ENCODE measurements at regions of chr2 and their contacts with region 1.

Region 1: DNA sequence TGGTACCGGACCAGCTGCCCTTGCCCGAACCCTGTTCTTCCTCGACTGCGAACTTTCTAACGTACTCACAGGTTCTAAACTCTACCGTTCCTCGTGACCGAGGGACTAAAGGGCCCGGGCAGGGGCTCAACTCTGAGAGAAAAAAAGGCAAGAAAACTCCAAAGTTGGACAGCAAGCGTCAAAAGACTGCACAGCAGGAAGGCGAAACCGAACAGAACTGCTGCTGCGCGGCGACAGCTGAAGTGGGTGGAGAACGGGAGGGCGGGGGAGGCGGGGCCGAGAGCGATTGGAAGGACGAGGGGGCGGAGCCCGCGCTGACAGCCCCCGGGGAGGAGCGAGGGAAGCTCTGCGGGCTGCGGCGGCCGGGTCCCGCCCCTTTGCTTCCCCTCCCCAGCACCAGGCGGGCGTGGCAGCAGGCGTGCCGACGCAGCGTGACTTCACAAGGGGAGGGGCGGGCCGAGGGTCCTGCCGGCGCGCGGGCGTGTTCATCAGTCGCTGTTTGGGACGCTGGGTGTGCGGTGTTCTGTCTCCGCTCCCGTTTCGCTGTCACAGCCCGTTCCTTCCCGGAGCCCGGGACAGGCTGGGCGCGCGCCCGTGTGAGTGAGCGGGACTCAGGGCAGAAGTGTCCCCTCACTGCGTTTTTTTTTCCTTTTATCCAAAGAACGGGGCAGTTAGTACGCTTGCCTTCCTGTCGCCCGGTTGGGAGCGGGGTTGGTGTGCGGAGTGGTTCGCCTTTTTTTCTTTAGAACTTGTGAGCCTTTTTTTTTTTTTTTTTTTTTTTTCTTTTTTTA is at the start of gene NABP1:
- DNase-seq: peak; percentile 97
- H3K4me3 ChIP-seq: peak within 1 kb of the TSS; percentile 84
- H3K27ac ChIP-seq: peak within 1 kb of the TSS; percentile 59
- H3K4me1 ChIP-seq: peaks cover 47% of the 10 kb centered on the region
- CTCF ChIP-seq: no peak
- total RNA-seq, gene NABP1: 16.7 and 18.9 TPM in 2 replicates

Region 2: DNA sequence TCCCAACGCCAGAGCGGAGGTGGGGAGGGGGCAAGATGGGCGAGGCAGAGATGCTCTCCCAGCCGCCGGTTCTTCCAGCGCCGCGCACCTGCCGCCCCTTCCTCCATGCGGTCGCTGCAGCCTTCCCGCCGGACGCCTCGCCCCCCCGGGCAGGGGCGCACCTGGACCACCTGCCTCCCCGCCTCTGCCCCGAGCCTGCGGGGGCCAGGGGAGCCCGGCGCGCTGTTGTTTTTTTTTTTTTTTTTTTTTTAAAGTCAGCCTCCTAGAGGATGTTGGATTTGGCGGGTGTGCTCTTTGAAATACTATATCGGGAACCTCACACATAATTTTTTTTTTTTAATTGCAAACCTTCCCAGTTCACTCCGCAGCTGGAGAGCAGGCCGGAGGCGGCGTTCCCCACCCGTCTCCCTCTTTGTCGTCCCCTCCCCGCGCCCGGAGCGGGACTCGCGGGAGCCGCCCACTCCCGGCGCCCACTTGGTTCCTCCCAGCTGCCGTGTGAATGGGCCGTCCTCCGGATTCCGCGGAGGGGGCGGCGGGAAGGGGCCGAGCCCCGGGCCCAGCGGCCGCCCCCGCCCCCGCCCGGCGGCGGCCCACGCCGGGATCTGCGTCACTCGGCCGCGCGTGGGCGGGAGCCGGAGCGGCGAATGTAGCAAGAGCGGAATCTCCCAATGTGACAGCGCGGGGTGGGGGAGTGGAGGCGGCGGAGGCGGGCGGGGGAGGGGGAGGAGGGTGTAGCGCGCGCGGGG is 1029.4 kb before region 1 on chr2:
- CTCF ChIA-PET with region 1: no interaction called
- POLR2A ChIA-PET with region 1: interaction called, 3 read pairs
- intact Hi-C with region 1: loop called (anchors 5 kb)
- DNase-seq: peak; percentile 81
- H3K4me3 ChIP-seq: peak overlapping the region; percentile 85
- H3K27ac ChIP-seq: peak overlapping the region; percentile 31
- H3K4me1 ChIP-seq: peaks cover 15% of the 10 kb centered on the region
- CTCF ChIP-seq: no peak

Region 3: GRCh38 chr2:190880378-190881073 is 797.3 kb before region 1 on chr2 and contains the start of gene GLS:
- CTCF ChIA-PET with region 1: no interaction called
- POLR2A ChIA-PET with region 1: interaction called, 8 read pairs
- intact Hi-C with region 1: loop called (anchors 5 kb)
- DNase-seq: peak; percentile 96
- H3K4me3 ChIP-seq: peak within 1 kb of the TSS; percentile 84
- H3K27ac ChIP-seq: peak within 1 kb of the TSS; percentile 87
- H3K4me1 ChIP-seq: peaks cover 28% of the 10 kb centered on the region
- CTCF ChIP-seq: no peak
- total RNA-seq, gene GLS: 82.0 and 102 TPM in 2 replicates

Region 4: DNA sequence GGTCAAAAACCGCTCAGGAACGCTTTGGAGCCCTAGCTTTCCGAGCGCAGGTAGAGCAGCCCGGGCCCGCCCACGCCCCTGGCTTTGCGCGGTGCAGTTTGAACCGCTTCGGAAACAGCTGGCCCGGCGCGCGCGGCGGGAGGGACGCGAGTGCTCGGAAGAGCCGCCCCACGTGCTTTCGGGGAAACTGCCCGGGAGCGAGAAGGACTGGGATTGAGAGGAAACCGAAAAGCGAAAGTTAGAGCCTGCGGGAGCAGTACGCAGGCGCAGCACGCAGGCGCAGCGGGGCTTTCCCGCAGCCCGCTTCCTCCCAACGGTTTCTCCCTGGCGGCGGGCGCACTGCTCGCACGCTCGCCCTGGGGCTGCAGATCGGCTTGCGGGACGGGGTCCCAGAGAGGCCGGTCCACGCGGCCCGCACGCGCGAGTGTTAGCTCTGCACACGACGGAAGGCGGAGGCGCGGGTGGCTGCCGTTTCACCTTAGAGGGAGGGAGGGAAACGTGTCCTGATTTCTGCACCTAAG is 657.6 kb before region 1 on chr2:
- CTCF ChIA-PET with region 1: no interaction called
- POLR2A ChIA-PET with region 1: interaction called, 3 read pairs
- intact Hi-C with region 1: loop called (anchors 2 kb)
- DNase-seq: peak; percentile 92
- H3K4me3 ChIP-seq: peak overlapping the region; percentile 69
- H3K27ac ChIP-seq: peak overlapping the region; percentile 35
- H3K4me1 ChIP-seq: peaks cover 16% of the 10 kb centered on the region
- CTCF ChIP-seq: no peak

Region 5: GRCh38 chr2:191617575-191617974 is 60.3 kb before region 1 on chr2:
- CTCF ChIA-PET with region 1: interaction called, 3 read pairs
- POLR2A ChIA-PET with region 1: interaction called, 54 read pairs
- intact Hi-C with region 1: loop called (anchors 2 kb)
- DNase-seq: peak; percentile 72
- H3K4me3 ChIP-seq: no peak overlapping the region
- H3K27ac ChIP-seq: peak overlapping the region; percentile 16
- H3K4me1 ChIP-seq: peaks cover 17% of the 10 kb centered on the region
- CTCF ChIP-seq: no peak

Region 6: GRCh38 chr2:191625016-191625415 is 52.8 kb before region 1 on chr2:
- CTCF ChIA-PET with region 1: interaction called, 3 read pairs
- POLR2A ChIA-PET with region 1: interaction called, 54 read pairs
- intact Hi-C with region 1: loop called (anchors 2 kb)
- DNase-seq: peak; percentile 60
- H3K4me3 ChIP-seq: no peak overlapping the region
- H3K27ac ChIP-seq: no peak overlapping the region
- H3K4me1 ChIP-seq: peaks cover 22% of the 10 kb centered on the region
- CTCF ChIP-seq: no peak

Region 7: GRCh38 chr2:192140236-192140839 is 462.5 kb after region 1 on chr2:
- CTCF ChIA-PET with region 1: no interaction called
- POLR2A ChIA-PET with region 1: no interaction called
- intact Hi-C with region 1: no loop called
- DNase-seq: no peak
- H3K4me3 ChIP-seq: no peak overlapping the region
- H3K27ac ChIP-seq: no peak overlapping the region
- H3K4me1 ChIP-seq: no peaks in the 10 kb centered on the region
- CTCF ChIP-seq: no peak